ENCODE measurements at regions of chr1 and their contacts with region 1.

Region 1: GRCh38 chr1:16293538-16293937 is 56.6 kb upstream of the CPLANE2 start:
- DNase-seq: no peak
- ATAC-seq: peak; percentile 72
- H3K4me3 ChIP-seq: no peak overlapping the region
- H3K27ac ChIP-seq: peak overlapping the region; percentile 31 to 76
- H3K4me1 ChIP-seq: peaks cover 12 to 18% of the 10 kb centered on the region in 2 donors
- H3K27me3 ChIP-seq: no peaks in the 10 kb centered on the region

Region 2: GRCh38 chr1:16249596-16250241 is 43.8 kb before region 1 on chr1:
- intact Hi-C with region 1: loop called (anchors 5 kb)
- DNase-seq: peak in 1 of 2 donors; percentile 65
- ATAC-seq: peak; percentile 85
- H3K4me3 ChIP-seq: no peak overlapping the region
- H3K27ac ChIP-seq: peak overlapping the region; percentile 20 to 23
- H3K4me1 ChIP-seq: peaks cover 11 to 12% of the 10 kb centered on the region in 2 donors
- H3K27me3 ChIP-seq: no peaks in the 10 kb centered on the region

Region 3: DNA sequence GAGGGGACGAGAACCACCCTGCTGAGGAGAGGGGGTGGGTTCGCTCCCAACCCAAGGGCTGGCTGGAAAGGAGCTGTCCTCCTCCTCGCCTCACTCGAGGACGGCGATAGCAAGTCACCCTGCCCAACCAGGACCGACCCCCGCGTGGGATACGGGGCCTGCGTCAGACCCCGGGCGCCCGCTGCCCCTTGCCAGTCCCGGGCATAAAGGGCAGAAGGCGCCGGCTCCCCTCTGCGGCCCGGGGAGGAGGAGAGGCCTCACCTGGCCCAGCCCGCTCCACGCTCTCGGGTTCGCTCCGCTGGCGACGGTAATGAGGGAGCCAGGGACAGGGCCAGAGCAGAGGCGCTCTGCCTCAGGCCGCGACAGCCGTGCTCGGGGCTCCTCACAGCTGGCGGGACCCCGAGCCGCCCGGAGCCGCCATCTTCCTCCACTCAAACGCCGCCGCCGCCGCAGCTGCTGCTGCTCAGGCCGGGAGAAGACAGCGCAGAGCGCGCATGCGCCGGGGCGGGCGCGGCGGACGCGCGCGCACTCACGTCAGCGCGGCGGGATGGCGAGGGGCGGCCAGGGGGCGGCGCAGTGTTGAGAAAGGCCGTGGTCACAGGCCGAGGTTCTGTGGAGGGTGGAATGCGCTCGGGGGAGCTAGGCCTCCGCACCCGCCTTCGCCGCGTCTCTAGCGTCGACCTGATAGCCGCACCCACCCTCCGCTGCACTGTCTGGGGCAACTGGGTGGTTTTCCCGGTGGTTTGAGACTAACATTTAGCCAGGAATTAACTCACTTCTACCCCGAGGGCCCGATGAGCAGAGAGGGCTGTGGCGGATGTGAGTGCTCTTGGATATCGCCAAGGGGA is 58.7 kb after region 1 on chr1 and contains the start of gene FBXO42:
- intact Hi-C with region 1: loop called (anchors 5 kb)
- DNase-seq: peak; percentile 95 to 97
- ATAC-seq: peak; percentile 96
- H3K4me3 ChIP-seq: peak within 1 kb of the TSS; percentile 35 to 96
- H3K27ac ChIP-seq: peak within 1 kb of the TSS; percentile 57 to 74
- H3K4me1 ChIP-seq: peaks cover 0 to 10% of the 10 kb centered on the region in 2 donors
- H3K27me3 ChIP-seq: no peaks in the 10 kb centered on the region
- total RNA-seq, gene FBXO42: 32.5 to 33.3 TPM

Region 4: GRCh38 chr1:16386454-16387113 is 93.0 kb after region 1 on chr1:
- intact Hi-C with region 1: no loop called
- DNase-seq: no peak
- ATAC-seq: peak; percentile 61
- H3K4me3 ChIP-seq: no peak overlapping the region
- H3K27ac ChIP-seq: peak overlapping the region; percentile 18 to 97
- H3K4me1 ChIP-seq: peaks cover 10 to 16% of the 10 kb centered on the region in 2 donors
- H3K27me3 ChIP-seq: no peaks in the 10 kb centered on the region